Head of caudate nucleus (tissue), 42 donors: ENCODE measurements at regions of chrX and their contacts with region 1.

Region 1: GRCh38 chrX:106481341-106481740 is 130.4 kb upstream of the RADX start:
- DNase-seq: peak in 35 of 42 donors; percentile 10 to 88 (median 58)

Region 2: GRCh38 chrX:106791495-106791894 is 310.2 kb after region 1 on chrX:
- intact Hi-C with region 1: loop called (anchors 10 kb)
- DNase-seq: peak in 1 of 42 donors; percentile 4